Calu3 (cell line): ENCODE measurements at regions of chr16 and their contacts with region 1.

Region 1: DNA sequence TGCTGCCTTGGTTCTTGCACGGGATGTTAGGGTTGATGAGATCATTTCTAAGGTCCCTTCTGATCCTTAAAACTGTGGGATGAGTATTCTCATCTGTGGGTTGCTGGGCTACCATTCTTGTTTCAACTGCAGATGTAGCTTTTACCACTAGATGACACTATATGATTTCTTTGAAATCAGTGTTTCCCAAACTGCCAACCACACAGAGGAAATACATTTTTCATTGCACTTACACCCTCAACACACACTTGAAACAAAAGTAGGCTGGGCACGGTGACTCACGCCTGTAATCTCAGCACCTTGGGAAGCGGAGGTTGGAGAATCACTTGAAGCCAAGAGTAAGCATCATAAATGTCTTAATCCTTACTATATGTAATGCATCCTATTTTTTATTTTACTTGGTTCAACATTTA is 15.3 kb downstream of the LCMT1 start:
- DNase-seq: peak; percentile 73
- H3K4me3 Mint-ChIP-seq: peak overlapping the region; percentile 13
- H3K27ac Mint-ChIP-seq: peak overlapping the region; percentile 60
- H3K4me1 Mint-ChIP-seq: peaks cover 42% of the 10 kb centered on the region
- H3K27me3 Mint-ChIP-seq: no peaks in the 10 kb centered on the region
- CTCF ChIP-seq: peak; percentile 48

Region 2: GRCh38 chr16:25051406-25052150 is 75.2 kb before region 1 on chr16:
- CTCF ChIA-PET with region 1: interaction called, 4 read pairs
- intact Hi-C with region 1: loop called (anchors 1 kb)
- DNase-seq: peak; percentile 70
- H3K4me3 Mint-ChIP-seq: peak overlapping the region; percentile 50
- H3K27ac Mint-ChIP-seq: peak overlapping the region; percentile 99
- H3K4me1 Mint-ChIP-seq: peaks cover 46% of the 10 kb centered on the region
- H3K27me3 Mint-ChIP-seq: no peaks in the 10 kb centered on the region
- CTCF ChIP-seq: no peak

Region 3: GRCh38 chr16:25066747-25067631 is 59.8 kb before region 1 on chr16:
- CTCF ChIA-PET with region 1: no interaction called
- intact Hi-C with region 1: no loop called
- DNase-seq: peak; percentile 89
- H3K4me3 Mint-ChIP-seq: peak overlapping the region; percentile 89
- H3K27ac Mint-ChIP-seq: peak overlapping the region; percentile 63
- H3K4me1 Mint-ChIP-seq: peaks cover 11% of the 10 kb centered on the region
- H3K27me3 Mint-ChIP-seq: no peaks in the 10 kb centered on the region
- CTCF ChIP-seq: no peak

Region 4: DNA sequence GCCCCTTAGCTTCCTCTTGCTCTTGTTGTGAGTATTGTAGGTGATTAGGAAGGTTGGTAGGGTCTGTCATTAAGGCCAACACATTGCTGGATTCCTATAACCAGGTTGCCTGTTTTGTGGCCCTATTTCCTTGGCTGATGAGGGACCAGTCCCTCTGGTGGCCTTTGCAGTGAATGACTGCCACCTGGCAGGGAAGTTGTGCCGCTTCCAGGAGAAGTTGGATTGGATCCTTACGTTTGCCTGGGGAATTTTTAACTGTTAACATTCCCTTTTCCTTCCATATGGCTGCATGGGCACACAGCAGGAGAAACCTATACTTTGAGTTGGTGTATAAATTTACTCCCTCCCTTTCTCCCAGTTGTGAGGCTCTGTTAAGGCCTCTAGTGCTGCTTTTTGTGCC is 17.1 kb after region 1 on chr16:
- CTCF ChIA-PET with region 1: no interaction called
- intact Hi-C with region 1: loop called (anchors 2 kb)
- DNase-seq: peak; percentile 26
- H3K4me3 Mint-ChIP-seq: no peak overlapping the region
- H3K27ac Mint-ChIP-seq: no peak overlapping the region
- H3K4me1 Mint-ChIP-seq: peaks cover 6% of the 10 kb centered on the region
- H3K27me3 Mint-ChIP-seq: no peaks in the 10 kb centered on the region
- CTCF ChIP-seq: peak; percentile 52